Activated CD8-positive, alpha-beta T cell treated with anti-CD3 and anti-CD28 coated beads for 36 hours (primary cell): ENCODE measurements at regions of chr2 and their contacts with region 1.

Region 1: GRCh38 chr2:25851740-25852503 is 26.4 kb downstream of the ASXL2 start:
- DNase-seq: peak; percentile 37
- ATAC-seq: peak; percentile 91
- H3K4me3 Mint-ChIP-seq: peak overlapping the region; percentile 55
- H3K27ac Mint-ChIP-seq: peak overlapping the region; percentile 88
- H3K4me1 Mint-ChIP-seq: peaks cover 47% of the 10 kb centered on the region
- H3K27me3 Mint-ChIP-seq: no peaks in the 10 kb centered on the region
- CTCF ChIP-seq: peak; percentile 63

Region 2: DNA sequence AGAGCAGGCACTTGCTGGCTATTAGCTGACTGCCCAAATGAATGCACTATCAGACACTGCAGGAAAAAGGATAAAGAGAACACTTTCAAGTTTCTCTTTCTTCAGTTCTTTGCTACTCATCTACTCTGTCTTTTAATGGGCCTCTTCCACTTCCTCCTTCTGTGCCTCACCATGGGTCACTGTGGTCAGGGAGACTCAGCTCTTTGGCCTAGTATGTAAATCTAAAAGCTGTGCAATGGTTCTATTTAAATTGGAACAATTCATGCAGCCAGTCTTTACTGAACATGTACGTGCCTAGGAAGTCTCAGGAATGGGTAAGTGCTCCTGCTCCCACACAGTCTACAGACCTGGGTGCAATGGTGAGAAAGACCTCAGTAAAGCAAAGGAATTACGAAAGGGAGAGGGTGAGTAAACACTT is 431.1 kb before region 1 on chr2:
- CTCF ChIA-PET with region 1: no interaction called
- POLR2A ChIA-PET with region 1: no interaction called
- intact Hi-C with region 1: no loop called
- DNase-seq: no peak
- ATAC-seq: no peak
- H3K4me3 Mint-ChIP-seq: no peak overlapping the region
- H3K27ac Mint-ChIP-seq: no peak overlapping the region
- H3K4me1 Mint-ChIP-seq: peaks cover 14% of the 10 kb centered on the region
- H3K27me3 Mint-ChIP-seq: no peaks in the 10 kb centered on the region
- CTCF ChIP-seq: no peak

Region 3: GRCh38 chr2:25445464-25445863 is 406.5 kb before region 1 on chr2:
- CTCF ChIA-PET with region 1: no interaction called
- POLR2A ChIA-PET with region 1: no interaction called
- intact Hi-C with region 1: no loop called
- DNase-seq: no peak
- ATAC-seq: no peak
- H3K4me3 Mint-ChIP-seq: no peak overlapping the region
- H3K27ac Mint-ChIP-seq: no peak overlapping the region
- H3K4me1 Mint-ChIP-seq: no peaks in the 10 kb centered on the region
- H3K27me3 Mint-ChIP-seq: no peaks in the 10 kb centered on the region
- CTCF ChIP-seq: no peak

Region 4: DNA sequence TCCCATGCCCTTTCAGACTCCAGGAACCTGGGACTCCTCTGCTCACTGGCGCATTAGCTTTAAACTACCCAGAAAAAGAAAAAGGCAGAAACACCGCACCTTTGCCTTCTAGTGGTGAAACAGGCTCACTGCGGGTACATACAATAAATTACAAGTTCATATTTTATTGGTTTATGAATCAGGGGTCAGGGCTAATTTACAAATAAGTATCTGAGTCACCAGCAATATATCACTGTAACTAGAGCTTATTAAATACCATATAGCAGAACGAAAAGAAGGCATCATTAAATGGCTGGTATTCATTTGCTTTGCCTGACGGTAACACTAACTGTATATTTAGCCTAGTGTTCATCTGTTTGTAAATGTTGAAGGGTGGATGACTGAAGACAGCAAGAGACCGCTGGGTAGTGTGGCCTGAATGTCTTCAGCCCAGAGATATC is 151.7 kb before region 1 on chr2:
- CTCF ChIA-PET with region 1: interaction called, 17 read pairs
- POLR2A ChIA-PET with region 1: no interaction called
- intact Hi-C with region 1: no loop called
- DNase-seq: peak; percentile 52
- ATAC-seq: peak; percentile 81
- H3K4me3 Mint-ChIP-seq: no peak overlapping the region
- H3K27ac Mint-ChIP-seq: no peak overlapping the region
- H3K4me1 Mint-ChIP-seq: peaks cover 3% of the 10 kb centered on the region
- H3K27me3 Mint-ChIP-seq: no peaks in the 10 kb centered on the region
- CTCF ChIP-seq: peak; percentile 74

Region 5: DNA sequence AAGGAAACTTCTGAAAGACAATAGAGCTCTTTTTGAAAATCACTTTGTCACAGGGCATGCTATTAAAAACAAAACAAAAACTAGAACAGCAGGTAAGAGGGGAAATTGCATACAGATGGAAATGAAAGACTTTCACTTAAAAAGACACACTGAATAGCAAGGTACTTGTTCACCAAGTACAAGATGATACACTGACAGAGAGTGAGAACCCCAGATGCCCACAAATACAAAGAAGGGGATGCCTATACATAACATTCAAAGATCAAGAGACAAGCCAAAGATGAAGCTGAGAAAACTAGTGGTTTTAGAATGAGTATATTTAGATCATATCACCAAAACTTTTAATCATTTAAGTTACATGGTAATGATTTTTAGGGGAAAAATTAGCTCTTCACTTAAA is 34.3 kb before region 1 on chr2:
- CTCF ChIA-PET with region 1: interaction called, 11 read pairs
- POLR2A ChIA-PET with region 1: no interaction called
- intact Hi-C with region 1: no loop called
- DNase-seq: peak; percentile 52
- ATAC-seq: peak; percentile 90
- H3K4me3 Mint-ChIP-seq: peak overlapping the region; percentile 33
- H3K27ac Mint-ChIP-seq: peak overlapping the region; percentile 80
- H3K4me1 Mint-ChIP-seq: peaks cover 77% of the 10 kb centered on the region
- H3K27me3 Mint-ChIP-seq: no peaks in the 10 kb centered on the region
- CTCF ChIP-seq: no peak

Region 6: GRCh38 chr2:25833566-25833965 is 18.4 kb before region 1 on chr2:
- CTCF ChIA-PET with region 1: interaction called, 19 read pairs
- POLR2A ChIA-PET with region 1: interaction called, 11 read pairs
- intact Hi-C with region 1: no loop called
- DNase-seq: peak; percentile 56
- ATAC-seq: no peak
- H3K4me3 Mint-ChIP-seq: no peak overlapping the region
- H3K27ac Mint-ChIP-seq: peak overlapping the region; percentile 96
- H3K4me1 Mint-ChIP-seq: peaks cover 68% of the 10 kb centered on the region
- H3K27me3 Mint-ChIP-seq: no peaks in the 10 kb centered on the region
- CTCF ChIP-seq: no peak

Region 7: DNA sequence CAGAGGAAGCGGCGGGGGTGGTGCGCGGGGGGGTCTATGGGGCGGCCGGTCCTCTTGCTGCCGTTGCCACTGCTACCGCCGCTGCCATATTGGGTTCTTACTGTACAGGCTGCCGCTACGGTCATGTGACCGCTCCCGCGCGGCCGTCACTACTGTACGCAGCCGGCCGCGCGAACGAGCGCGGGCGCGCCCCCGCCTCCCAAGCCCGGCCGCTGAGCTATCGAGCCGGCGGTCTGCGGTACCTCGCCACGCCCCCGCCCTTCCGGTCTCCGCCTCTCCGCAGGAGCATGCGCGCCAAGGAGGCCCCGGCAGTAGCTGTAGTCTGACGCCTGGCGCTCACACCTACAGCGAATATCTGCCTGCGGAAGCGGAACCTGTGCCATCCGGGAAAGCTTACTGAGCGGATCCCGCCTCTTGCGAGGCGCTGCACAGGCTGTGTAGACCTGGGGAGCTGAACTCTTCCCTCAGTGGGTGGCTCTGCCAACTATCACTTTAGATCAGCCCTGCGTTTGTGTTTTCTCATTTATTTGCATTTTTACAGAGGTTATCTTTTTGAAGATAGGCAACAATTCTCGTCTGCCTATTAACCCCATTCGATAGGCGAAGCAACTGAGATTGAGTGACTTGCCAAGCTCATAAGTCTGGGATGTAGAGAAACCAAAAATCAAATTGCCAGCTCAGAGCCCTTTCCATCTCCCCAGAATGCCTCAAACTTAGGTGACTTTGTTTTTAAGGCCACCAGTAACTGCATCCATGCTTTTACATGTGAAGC is 26.6 kb after region 1 on chr2 and contains the start of gene ASXL2:
- CTCF ChIA-PET with region 1: interaction called, 25 read pairs
- POLR2A ChIA-PET with region 1: interaction called, 13 read pairs
- intact Hi-C with region 1: no loop called
- DNase-seq: peak; percentile 97
- ATAC-seq: peak; percentile 88
- H3K4me3 Mint-ChIP-seq: peak within 1 kb of the TSS; percentile 95
- H3K27ac Mint-ChIP-seq: peak within 1 kb of the TSS; percentile 98
- H3K4me1 Mint-ChIP-seq: peaks cover 43% of the 10 kb centered on the region
- H3K27me3 Mint-ChIP-seq: no peaks in the 10 kb centered on the region
- CTCF ChIP-seq: no peak
- total RNA-seq, gene ASXL2: 42.5 to 42.8 TPM

Region 8: DNA sequence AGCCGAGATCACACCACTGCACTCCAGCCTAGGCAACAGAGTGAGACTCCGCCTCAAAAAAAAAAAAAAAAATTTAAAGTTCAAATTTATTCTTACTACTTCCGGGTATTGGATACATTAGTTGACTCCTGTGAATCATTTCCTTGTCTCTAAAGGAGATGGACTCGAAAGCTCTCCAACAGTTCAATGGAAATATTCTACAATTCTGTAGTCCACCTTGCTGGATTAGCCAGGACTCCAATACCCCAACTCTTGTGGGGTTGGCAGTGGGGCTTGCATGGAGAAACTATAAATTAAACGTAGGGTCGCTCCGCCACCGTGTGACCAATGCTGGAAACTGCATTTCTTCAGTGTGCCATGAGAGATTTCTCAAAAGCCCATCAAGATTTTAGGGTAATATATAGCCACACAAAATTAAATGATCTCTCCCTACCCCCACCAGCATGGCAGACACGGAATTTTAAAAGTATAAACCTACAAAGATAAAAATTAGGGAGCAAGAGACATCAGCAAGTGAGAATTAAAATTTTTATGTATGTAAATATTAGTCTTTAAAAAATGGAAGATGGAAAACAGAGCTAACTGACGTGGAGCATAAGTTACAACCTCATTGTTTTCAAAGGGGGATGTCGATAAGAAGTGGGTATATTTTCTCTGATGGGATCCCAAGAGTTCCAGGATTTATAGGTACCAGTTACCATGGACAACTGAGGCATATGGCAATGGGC is 293.2 kb after region 1 on chr2:
- CTCF ChIA-PET with region 1: interaction called, 12 read pairs
- POLR2A ChIA-PET with region 1: no interaction called
- intact Hi-C with region 1: no loop called
- DNase-seq: peak; percentile 82
- ATAC-seq: peak; percentile 94
- H3K4me3 Mint-ChIP-seq: no peak overlapping the region
- H3K27ac Mint-ChIP-seq: no peak overlapping the region
- H3K4me1 Mint-ChIP-seq: peaks cover 1% of the 10 kb centered on the region
- H3K27me3 Mint-ChIP-seq: peaks cover 4% of the 10 kb centered on the region
- CTCF ChIP-seq: peak; percentile 84